Activated CD4-positive, alpha-beta memory T cell treated with anti-CD3 and anti-CD28 coated beads for 36 hours (primary cell): ENCODE measurements at regions of chr2 and their contacts with region 1.

Region 1: GRCh38 chr2:230614913-230615332 is 97.7 kb upstream of the CAB39 start:
- DNase-seq: peak; percentile 78
- H3K4me3 Mint-ChIP-seq: no peak overlapping the region
- H3K27ac Mint-ChIP-seq: peak overlapping the region; percentile 56
- H3K4me1 Mint-ChIP-seq: peaks cover 22% of the 10 kb centered on the region
- H3K27me3 Mint-ChIP-seq: no peaks in the 10 kb centered on the region

Region 2: DNA sequence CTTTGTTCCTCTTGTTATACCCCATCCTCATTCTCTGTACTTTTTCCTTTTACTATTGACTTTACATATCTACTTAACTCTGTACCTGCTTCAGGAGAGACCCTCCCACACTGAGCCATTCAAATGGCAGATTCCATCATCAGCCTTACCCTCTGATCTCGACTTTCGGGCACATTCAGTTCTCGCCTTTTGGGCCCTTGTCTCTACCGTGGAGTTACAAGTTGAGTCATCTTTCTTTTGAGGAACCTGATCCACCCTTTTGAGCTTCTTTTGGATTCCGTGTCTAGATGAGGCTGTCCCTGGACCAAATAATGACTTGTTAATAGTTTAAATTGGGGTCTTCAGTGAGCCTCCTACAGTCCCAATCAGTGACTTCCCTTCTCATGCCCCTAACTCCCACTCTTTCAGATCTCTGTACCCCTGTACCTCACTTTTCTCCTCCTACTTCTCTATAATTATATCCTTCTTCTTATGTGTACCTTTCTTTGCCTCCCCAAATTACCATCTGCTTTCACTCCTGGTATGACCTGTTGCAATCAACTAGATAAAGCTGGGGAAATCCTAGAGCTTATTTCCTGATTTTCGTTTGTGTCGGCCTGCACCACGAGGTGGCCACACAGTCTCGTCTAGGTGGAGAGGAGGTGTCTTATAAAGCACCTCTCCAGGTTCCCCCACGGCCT is 412.4 kb before region 1 on chr2:
- CTCF ChIA-PET with region 1: interaction called, 13 read pairs
- POLR2A ChIA-PET with region 1: no interaction called
- intact Hi-C with region 1: loop called (anchors 1 kb)
- DNase-seq: peak; percentile 75
- H3K4me3 Mint-ChIP-seq: peak overlapping the region; percentile 10
- H3K27ac Mint-ChIP-seq: peak overlapping the region; percentile 80
- H3K4me1 Mint-ChIP-seq: peaks cover 35% of the 10 kb centered on the region
- H3K27me3 Mint-ChIP-seq: no peaks in the 10 kb centered on the region

Region 3: GRCh38 chr2:230447455-230448451 is 167.2 kb before region 1 on chr2:
- CTCF ChIA-PET with region 1: no interaction called
- POLR2A ChIA-PET with region 1: no interaction called
- intact Hi-C with region 1: loop called (anchors 5 kb)
- DNase-seq: peak; percentile 53
- H3K4me3 Mint-ChIP-seq: peak overlapping the region; percentile 40
- H3K27ac Mint-ChIP-seq: peak overlapping the region; percentile 80
- H3K4me1 Mint-ChIP-seq: peaks cover 59% of the 10 kb centered on the region
- H3K27me3 Mint-ChIP-seq: no peaks in the 10 kb centered on the region